Adrenal gland (tissue), 19 donors: ENCODE measurements at regions of chr2 and their contacts with region 1.

Region 1: GRCh38 chr2:29923110-29923721 is 1.8 kb upstream of the ALK start:
- DNase-seq: peak; percentile 42 to 91 (median 70)
- H3K4me3 ChIP-seq: no peak overlapping the region
- H3K27ac ChIP-seq: no peak overlapping the region
- H3K4me1 ChIP-seq: peaks cover 19 to 21% of the 10 kb centered on the region in 2 donors
- H3K27me3 ChIP-seq: peaks cover 13% of the 10 kb centered on the region
- CTCF ChIP-seq: peak; percentile 72 to 99 (median 84)
- POLR2A ChIP-seq: no peak

Region 2: DNA sequence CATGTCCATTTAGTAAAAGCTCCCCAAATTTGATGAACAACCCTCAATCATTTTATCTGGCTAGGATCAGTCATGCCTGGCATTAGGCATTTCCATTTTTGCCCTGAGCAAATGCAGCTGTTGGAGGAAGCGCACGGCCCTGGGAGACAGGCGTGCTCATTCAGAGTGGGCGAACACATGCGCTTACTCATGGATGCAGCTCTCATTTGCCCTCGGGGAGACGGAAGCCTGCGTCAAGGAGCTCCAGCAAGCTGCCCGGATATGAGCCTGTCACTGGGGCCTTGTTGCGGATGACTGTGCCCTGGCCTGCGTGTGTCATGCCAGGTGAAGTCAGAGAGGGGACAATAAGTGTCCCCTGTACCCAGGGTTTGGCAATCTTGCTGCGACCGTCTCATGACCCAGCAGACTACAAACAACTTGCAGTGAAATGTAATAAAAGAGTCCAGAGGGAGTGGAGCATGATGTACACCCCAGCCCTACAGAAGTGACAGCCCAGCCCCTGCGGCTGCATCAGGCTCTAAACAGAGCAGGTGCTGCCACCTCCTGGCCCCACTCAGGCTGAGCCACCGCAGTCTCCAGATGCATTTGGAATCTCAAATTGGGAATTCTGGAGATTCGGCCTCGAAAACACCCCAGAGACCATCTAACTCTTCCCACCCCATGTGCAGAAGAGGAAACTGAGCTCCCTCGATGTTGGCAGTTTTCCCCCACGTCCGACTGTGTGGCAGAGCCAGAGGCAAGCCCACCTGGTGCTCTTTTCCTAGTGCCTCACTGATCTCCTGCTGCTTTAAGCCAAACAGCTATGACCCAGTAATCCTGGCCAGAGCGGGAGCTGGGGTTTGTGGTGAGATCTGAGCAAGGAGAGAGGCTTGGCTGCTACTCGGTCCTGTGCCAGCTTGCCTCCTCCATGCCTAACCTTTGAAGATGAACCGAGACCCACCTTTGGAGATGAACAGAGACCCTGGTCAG is 103.2 kb after region 1 on chr2:
- intact Hi-C with region 1: loop called in 1 of 2 experiments (anchors 5 kb)
- DNase-seq: peak; percentile 21 to 90 (median 52)
- H3K4me3 ChIP-seq: no peak overlapping the region
- H3K27ac ChIP-seq: peak overlapping the region in 1 of 5 donors; percentile 49
- H3K4me1 ChIP-seq: no peaks in the 10 kb centered on the region
- H3K27me3 ChIP-seq: no peaks in the 10 kb centered on the region
- CTCF ChIP-seq: peak; percentile 18 to 62 (median 57)
- POLR2A ChIP-seq: no peak

Region 3: GRCh38 chr2:30072250-30072842 is 149.1 kb after region 1 on chr2:
- intact Hi-C with region 1: loop called (anchors 5 kb)
- DNase-seq: peak; percentile 70 to 91 (median 74)
- H3K4me3 ChIP-seq: no peak overlapping the region
- H3K27ac ChIP-seq: no peak overlapping the region
- H3K4me1 ChIP-seq: no peaks in the 10 kb centered on the region
- H3K27me3 ChIP-seq: peaks cover 4% of the 10 kb centered on the region
- CTCF ChIP-seq: peak; percentile 62 to 76 (median 71)
- POLR2A ChIP-seq: no peak